ENCODE measurements at regions of chr11 and their contacts with region 1.

Region 1: DNA sequence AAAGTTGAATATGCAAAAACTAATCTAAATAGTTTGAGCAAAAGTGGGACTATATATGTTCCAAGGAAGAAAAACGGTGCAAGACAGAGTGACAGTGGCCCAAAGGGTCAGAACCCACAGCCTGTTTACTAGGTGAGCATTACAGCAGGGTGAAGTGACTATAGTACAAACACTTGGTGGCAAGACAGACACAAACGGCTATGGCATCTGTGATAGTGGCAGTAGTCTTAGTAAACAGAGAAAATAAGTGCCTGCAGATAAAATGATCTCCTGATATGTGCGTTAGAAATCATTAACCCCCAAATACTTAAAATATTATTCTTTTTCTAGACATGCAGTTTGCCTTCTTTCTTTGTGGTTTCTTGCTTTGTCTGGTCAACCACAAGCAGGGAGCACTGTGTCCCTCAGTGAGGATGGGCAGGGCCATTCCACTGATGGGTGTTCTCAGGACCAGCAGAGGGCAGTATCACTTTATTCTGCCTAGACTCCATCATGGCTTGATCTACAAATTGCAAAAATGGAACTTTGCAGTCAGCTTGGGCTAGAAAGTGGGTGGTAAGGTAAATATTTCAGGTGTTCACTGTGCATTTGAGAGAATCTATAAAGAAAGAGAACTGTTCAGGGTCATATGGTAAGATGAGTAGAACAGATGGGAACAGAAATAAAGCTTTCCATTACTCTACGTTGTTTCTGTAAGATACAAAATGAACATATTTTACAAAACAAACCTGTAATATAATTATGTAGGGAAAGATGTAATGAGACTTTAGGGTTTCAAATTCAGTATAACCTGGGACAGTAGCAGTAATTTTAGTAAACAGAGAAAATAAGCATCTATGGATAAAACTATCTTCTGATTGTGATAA is 198.2 kb downstream of the SWAP70 start:
- DNase-seq: no peak
- H3K4me3 ChIP-seq: no peak overlapping the region
- H3K27ac ChIP-seq: no peak overlapping the region
- H3K4me1 ChIP-seq: no peaks in the 10 kb centered on the region
- H3K27me3 ChIP-seq: no peaks in the 10 kb centered on the region
- CTCF ChIP-seq: peak; percentile 40 to 59 (median 45)

Region 2: DNA sequence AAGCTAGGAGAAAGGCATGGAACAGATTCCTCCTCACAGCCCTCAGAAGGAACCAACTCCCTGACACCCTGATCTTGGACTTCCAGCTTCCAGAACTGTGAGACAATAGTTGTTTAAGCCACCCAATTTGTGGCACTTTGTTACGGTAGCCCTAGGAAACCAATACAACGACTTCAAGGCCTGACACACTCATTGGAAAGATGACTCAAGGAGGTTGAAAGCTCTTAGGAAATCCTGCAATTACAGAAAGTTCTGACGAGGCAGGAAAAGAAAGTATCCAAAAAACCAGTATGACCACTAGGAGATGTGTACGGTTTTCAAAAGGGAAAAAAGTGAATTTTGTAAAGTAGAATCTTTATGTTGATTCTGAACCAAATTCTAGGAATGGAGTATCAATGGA is 36.8 kb before region 1 on chr11:
- intact Hi-C with region 1: no loop called
- DNase-seq: no peak
- H3K4me3 ChIP-seq: no peak overlapping the region
- H3K27ac ChIP-seq: no peak overlapping the region
- H3K4me1 ChIP-seq: no peaks in the 10 kb centered on the region
- H3K27me3 ChIP-seq: no peaks in the 10 kb centered on the region
- CTCF ChIP-seq: no peak

Region 3: GRCh38 chr11:9884601-9885000 is 22.5 kb after region 1 on chr11:
- intact Hi-C with region 1: no loop called
- DNase-seq: no peak
- H3K4me3 ChIP-seq: no peak overlapping the region
- H3K27ac ChIP-seq: no peak overlapping the region
- H3K4me1 ChIP-seq: no peaks in the 10 kb centered on the region
- H3K27me3 ChIP-seq: no peaks in the 10 kb centered on the region
- CTCF ChIP-seq: no peak

Region 4: GRCh38 chr11:9972989-9973388 is 110.9 kb after region 1 on chr11:
- intact Hi-C with region 1: loop called (anchors 10 kb)
- DNase-seq: no peak
- H3K4me3 ChIP-seq: no peak overlapping the region
- H3K27ac ChIP-seq: no peak overlapping the region
- H3K4me1 ChIP-seq: no peaks in the 10 kb centered on the region
- H3K27me3 ChIP-seq: no peaks in the 10 kb centered on the region
- CTCF ChIP-seq: peak; percentile 42 to 78 (median 64)

Measured in ascending aorta (tissue), 2 donors.